A549 (cell line): ENCODE measurements at regions of chr2 and their contacts with region 1.

Region 1: GRCh38 chr2:85066874-85067351 is 66.3 kb upstream of the TCF7L1 start:
- DNase-seq: peak; percentile 77 to 87
- ATAC-seq: peak; percentile 88 to 93
- H3K4me3 ChIP-seq: peak overlapping the region; percentile 21; the same call in 2 of the 3 replicates
- H3K27ac ChIP-seq: peak overlapping the region; percentile 45 to 68; a peak in 4 of 6 replicates
- H3K4me1 ChIP-seq: no peaks in the 10 kb centered on the region
- CTCF ChIP-seq: peak; percentile 97
- EP300 ChIP-seq: no peak
- POLR2A ChIP-seq: no peak
- RAD21 ChIP-seq: peak; percentile 94

Region 2: GRCh38 chr2:85042330-85042729 is 24.6 kb before region 1 on chr2:
- CTCF ChIA-PET with region 1: interaction called, 27 read pairs
- POLR2A ChIA-PET with region 1: no interaction called
- DNase-seq: no peak
- ATAC-seq: no peak; a peak in 1 of 6 replicates
- H3K4me3 ChIP-seq: no peak overlapping the region
- H3K27ac ChIP-seq: no peak overlapping the region
- H3K4me1 ChIP-seq: 0 out of 3 replicates have a peak, but pooled peaks cover 5% of the 10 kb centered on the region
- CTCF ChIP-seq: no peak
- EP300 ChIP-seq: no peak
- POLR2A ChIP-seq: no peak
- RAD21 ChIP-seq: no peak

Region 3: GRCh38 chr2:85104228-85104627 is 37.3 kb after region 1 on chr2:
- CTCF ChIA-PET with region 1: interaction called, 15 read pairs
- POLR2A ChIA-PET with region 1: no interaction called
- DNase-seq: no peak
- ATAC-seq: no peak
- H3K4me3 ChIP-seq: no peak overlapping the region
- H3K27ac ChIP-seq: no peak overlapping the region
- H3K4me1 ChIP-seq: peaks cover 5% of the 10 kb centered on the region; the same call in 1 of the 3 replicates
- CTCF ChIP-seq: no peak
- EP300 ChIP-seq: no peak
- POLR2A ChIP-seq: no peak
- RAD21 ChIP-seq: no peak

Region 4: DNA sequence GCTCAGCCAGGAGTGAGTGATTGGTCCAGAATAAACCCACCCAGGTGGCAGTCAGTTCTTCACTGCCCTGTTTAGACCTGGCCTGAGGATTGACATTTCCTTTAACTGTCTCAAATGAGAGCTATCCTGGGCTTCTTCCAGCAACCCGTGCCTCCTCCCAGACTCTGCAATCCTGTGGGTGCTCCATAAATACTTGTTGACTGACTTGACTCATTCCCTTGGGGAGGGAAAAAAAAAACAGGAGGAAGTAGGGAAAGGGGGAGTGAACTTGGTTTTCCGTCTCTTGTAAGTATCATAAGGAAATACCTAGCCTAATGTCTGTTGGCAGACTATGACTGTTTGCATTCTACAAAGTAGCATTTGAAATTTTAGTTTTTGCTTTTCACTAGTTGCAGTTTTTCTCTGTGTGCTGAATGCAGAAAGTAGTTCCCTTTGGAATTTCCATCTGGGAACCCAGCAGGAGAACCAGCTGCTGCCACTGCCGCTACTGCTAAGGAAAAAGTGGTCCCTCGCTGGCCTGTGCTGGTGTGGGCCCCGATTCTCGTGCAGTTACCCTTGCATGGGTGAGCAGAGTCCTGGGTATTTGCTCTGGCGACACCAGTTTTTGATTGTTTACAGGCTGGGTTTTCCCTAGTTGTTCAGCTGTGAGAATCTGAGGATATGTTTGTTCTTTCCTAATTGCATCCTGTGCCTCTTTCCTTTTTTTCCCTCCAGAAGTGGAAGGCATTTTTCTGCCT is 182.0 kb after region 1 on chr2:
- CTCF ChIA-PET with region 1: interaction called, 12 read pairs
- POLR2A ChIA-PET with region 1: no interaction called
- DNase-seq: peak in 1 of 2 experiments; percentile 57
- ATAC-seq: peak; percentile 35 to 76; a peak in 5 of 6 replicates
- H3K4me3 ChIP-seq: no peak overlapping the region
- H3K27ac ChIP-seq: peak overlapping the region in 1 of 2 experiments; percentile 30; a peak in 3 of 6 replicates
- H3K4me1 ChIP-seq: peaks cover 22% of the 10 kb centered on the region
- CTCF ChIP-seq: no peak
- EP300 ChIP-seq: no peak
- POLR2A ChIP-seq: no peak
- RAD21 ChIP-seq: no peak

Region 5: GRCh38 chr2:85288244-85288725 is 221.4 kb after region 1 on chr2:
- CTCF ChIA-PET with region 1: interaction called, 376 read pairs
- POLR2A ChIA-PET with region 1: interaction called, 3 read pairs
- DNase-seq: peak; percentile 82 to 86
- ATAC-seq: peak; percentile 78 to 83
- H3K4me3 ChIP-seq: no peak overlapping the region
- H3K27ac ChIP-seq: peak overlapping the region; percentile 62 to 82
- H3K4me1 ChIP-seq: peaks cover 31% of the 10 kb centered on the region
- CTCF ChIP-seq: no peak
- EP300 ChIP-seq: no peak
- POLR2A ChIP-seq: no peak
- RAD21 ChIP-seq: no peak

Region 6: DNA sequence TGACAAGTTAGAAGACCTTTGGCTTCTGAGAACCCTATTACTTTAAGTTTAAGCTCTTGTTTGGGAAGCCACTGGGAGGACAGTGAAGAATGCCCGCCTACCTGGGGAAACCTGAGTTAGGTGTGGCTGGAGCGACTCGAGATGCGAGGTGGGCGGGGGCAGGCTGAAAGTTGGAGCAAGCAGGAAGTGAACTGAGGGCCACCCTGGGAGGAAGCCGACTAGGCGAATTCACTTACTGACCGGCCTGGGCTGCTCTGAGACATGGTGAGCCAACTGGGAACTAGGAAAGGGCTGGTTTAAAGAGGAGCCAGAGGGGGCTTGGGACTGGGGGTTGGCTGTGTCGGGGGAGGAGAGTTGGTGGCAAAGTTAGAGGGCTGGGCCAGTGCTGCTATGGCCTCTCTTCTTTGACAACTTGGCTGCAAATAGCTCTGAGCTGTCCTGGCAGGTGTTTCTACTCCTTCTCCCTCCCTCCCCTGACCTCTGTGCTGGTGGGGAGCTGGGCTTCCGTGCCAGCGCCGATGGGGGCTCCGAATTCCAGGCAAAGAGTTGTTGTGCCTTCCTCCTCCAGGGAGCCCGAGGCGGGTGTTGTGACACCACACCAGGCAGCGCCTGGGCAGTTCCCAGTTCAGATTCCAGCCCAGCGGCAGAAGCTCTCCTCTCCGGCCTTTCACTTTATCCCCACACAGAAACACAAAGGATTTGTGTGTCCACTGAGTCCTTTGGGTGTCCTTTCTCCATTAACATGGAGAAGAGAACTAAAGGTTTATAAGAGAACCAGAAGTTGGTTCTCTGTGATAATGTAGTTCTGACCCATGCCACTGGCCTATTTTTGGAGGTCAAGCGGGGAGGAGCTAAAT is 510.7 kb after region 1 on chr2 and contains the start of gene VAMP8:
- CTCF ChIA-PET with region 1: no interaction called
- POLR2A ChIA-PET with region 1: no interaction called
- DNase-seq: peak in 1 of 2 experiments; percentile 40
- ATAC-seq: peak; percentile 60 to 79
- H3K4me3 ChIP-seq: peak within 1 kb of the TSS; percentile 29
- H3K27ac ChIP-seq: peak within 1 kb of the TSS; percentile 52 to 65
- H3K4me1 ChIP-seq: peaks cover 5% of the 10 kb centered on the region; the same call in 1 of the 3 replicates
- CTCF ChIP-seq: no peak
- EP300 ChIP-seq: no peak
- POLR2A ChIP-seq: no peak
- RAD21 ChIP-seq: no peak
- polyA plus RNA-seq, gene VAMP8: 38.3 and 41.1 TPM in 2 replicates